ENCODE measurements at regions of chr20 and their contacts with region 1.

Region 1: GRCh38 chr20:7392542-7393206 is 547.6 kb downstream of the HAO1 start:
- DNase-seq: no peak
- H3K4me3 ChIP-seq: no peak overlapping the region
- H3K27ac ChIP-seq: no peak overlapping the region
- H3K4me1 ChIP-seq: no peaks in the 10 kb centered on the region
- H3K27me3 ChIP-seq: no peaks in the 10 kb centered on the region
- CTCF ChIP-seq: no peak

Region 2: DNA sequence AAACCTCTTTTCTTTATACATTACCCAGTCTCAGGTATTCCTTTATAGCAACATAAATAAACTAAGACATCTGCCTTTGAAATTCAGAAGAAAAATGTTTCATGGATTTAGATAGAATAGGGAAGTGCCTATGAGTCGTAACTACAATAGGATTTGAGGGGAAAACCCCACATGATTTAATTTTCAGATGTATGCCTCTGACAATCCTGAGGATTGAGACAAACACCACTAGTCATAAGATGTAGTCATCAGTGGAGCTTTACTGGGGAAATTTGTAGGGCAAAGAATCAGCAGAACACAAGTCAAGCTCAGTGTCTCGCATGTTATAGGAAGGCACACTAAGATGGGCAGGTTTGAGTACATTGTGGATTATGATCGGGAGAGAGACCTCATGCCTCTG is 58.8 kb before region 1 on chr20:
- intact Hi-C with region 1: loop called (anchors 10 kb)
- DNase-seq: no peak
- H3K4me3 ChIP-seq: no peak overlapping the region
- H3K27ac ChIP-seq: no peak overlapping the region
- H3K4me1 ChIP-seq: no peaks in the 10 kb centered on the region
- H3K27me3 ChIP-seq: no peaks in the 10 kb centered on the region
- CTCF ChIP-seq: no peak

Region 3: DNA sequence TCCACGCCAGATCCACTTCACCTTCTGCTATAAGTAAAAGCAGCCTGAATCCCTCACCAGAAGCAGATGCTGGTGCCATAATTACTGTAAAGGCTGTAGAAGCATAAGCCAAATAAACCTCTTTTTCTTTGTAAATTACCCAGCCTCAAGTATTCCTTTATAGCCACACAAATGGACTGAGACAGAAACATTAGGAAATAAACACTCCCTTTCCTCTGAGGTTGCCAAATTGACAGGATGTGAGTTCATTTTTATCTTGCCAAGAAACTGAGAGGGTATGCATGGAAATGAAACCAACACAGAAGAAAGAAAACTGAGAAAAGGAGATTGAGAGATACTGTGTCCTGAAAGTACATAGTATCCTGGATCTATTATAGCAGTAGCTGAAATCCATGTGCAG is 66.4 kb after region 1 on chr20:
- intact Hi-C with region 1: no loop called
- DNase-seq: no peak
- H3K4me3 ChIP-seq: no peak overlapping the region
- H3K27ac ChIP-seq: no peak overlapping the region
- H3K4me1 ChIP-seq: no peaks in the 10 kb centered on the region
- H3K27me3 ChIP-seq: no peaks in the 10 kb centered on the region
- CTCF ChIP-seq: no peak

Region 4: GRCh38 chr20:7723284-7723683 is 330.6 kb after region 1 on chr20:
- intact Hi-C with region 1: no loop called
- DNase-seq: no peak
- H3K4me3 ChIP-seq: no peak overlapping the region
- H3K27ac ChIP-seq: no peak overlapping the region
- H3K4me1 ChIP-seq: no peaks in the 10 kb centered on the region
- H3K27me3 ChIP-seq: no peaks in the 10 kb centered on the region
- CTCF ChIP-seq: no peak